ENCODE measurements at regions of chr19 and their contacts with region 1.

Region 1: DNA sequence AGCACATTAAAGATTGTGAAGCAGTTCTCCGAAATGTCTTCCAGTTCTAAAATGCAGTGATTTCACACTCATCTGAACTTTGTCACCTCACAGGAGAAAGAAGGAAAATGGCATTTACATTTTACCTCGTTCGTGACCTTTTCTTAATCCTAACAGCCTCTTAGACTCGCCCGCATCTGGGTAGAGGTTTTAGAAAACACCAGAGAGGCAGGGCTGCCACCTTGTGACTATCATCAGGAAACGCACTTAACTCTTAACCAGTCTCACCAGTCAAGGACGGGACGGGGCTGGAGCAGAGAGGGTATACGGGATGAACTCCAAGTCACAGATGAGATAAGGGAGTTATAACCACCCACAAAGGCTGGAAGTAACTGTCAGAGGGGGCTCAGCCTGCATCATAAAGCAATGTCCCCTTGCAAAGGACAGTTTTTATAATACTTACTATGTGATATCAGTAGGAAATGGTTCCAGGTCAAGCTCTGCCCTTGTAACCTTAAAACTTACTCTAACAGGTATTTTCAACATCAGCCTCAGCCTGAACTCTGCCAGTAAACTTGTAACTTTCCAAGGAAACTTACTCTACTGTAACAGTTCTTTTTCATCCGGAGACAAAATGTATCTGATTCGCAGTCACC is 8.6 kb upstream of the CEACAM6 start:
- DNase-seq: no peak
- ATAC-seq: peak; percentile 96
- H3K4me3 ChIP-seq: no peak overlapping the region
- H3K27ac ChIP-seq: no peak overlapping the region
- H3K4me1 ChIP-seq: no peaks in the 10 kb centered on the region
- H3K27me3 ChIP-seq: no peaks in the 10 kb centered on the region; the same call in 1 of the 2 replicates
- CTCF ChIP-seq: peak; percentile 80

Region 2: GRCh38 chr19:41641879-41642485 is 104.7 kb before region 1 on chr19:
- CTCF ChIA-PET with region 1: interaction called, 3 read pairs
- POLR2A ChIA-PET with region 1: no interaction called
- in situ Hi-C with region 1: no loop called
- intact Hi-C with region 1: loop called (anchors 5 kb)
- DNase-seq: peak; percentile 33
- ATAC-seq: peak; percentile 94
- H3K4me3 ChIP-seq: no peak overlapping the region
- H3K27ac ChIP-seq: no peak overlapping the region
- H3K4me1 ChIP-seq: no peaks in the 10 kb centered on the region
- H3K27me3 ChIP-seq: no peaks in the 10 kb centered on the region
- CTCF ChIP-seq: peak; percentile 89

Region 3: GRCh38 chr19:41706741-41707501 is 39.8 kb before region 1 on chr19:
- CTCF ChIA-PET with region 1: interaction called, 11 read pairs
- POLR2A ChIA-PET with region 1: no interaction called
- in situ Hi-C with region 1: no loop called
- intact Hi-C with region 1: loop called (anchors 2 kb)
- DNase-seq: peak; percentile 43
- ATAC-seq: peak; percentile 97
- H3K4me3 ChIP-seq: peak overlapping the region; percentile 12 to 40; a peak in 2 of 4 replicates
- H3K27ac ChIP-seq: no peak overlapping the region
- H3K4me1 ChIP-seq: no peaks in the 10 kb centered on the region
- H3K27me3 ChIP-seq: no peaks in the 10 kb centered on the region; the same call in 1 of the 2 replicates
- CTCF ChIP-seq: peak; percentile 97

Region 4: DNA sequence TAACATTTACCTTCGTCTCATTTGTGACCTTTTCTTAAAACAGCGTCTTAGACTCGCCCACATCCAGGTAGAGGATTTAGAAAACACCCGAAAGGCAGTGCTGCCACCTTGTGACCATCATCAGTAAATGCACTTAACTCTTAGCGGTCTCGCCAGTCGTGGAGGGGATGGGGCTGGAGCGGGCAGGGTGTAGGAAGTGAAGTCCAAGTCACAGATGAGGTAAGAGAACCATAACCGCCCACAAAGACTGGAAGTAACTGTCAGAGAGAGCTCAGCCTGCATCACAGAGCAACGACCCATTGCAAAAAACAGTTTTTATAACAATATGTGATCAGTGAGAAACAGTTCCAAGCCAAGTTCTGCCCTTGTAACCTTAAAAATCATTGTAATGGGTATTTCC is 38.9 kb after region 1 on chr19:
- CTCF ChIA-PET with region 1: interaction called, 12 read pairs
- POLR2A ChIA-PET with region 1: no interaction called
- in situ Hi-C with region 1: no loop called
- intact Hi-C with region 1: loop called (anchors 5 kb)
- DNase-seq: no peak
- ATAC-seq: peak; percentile 93
- H3K4me3 ChIP-seq: no peak overlapping the region
- H3K27ac ChIP-seq: no peak overlapping the region
- H3K4me1 ChIP-seq: 0 out of 2 replicates have a peak, but pooled peaks cover 3% of the 10 kb centered on the region
- H3K27me3 ChIP-seq: peaks cover 2% of the 10 kb centered on the region; the same call in 1 of the 2 replicates
- CTCF ChIP-seq: peak; percentile 88

Region 5: GRCh38 chr19:41821003-41821735 is 74.5 kb after region 1 on chr19:
- CTCF ChIA-PET with region 1: no interaction called
- POLR2A ChIA-PET with region 1: no interaction called
- in situ Hi-C with region 1: no loop called
- intact Hi-C with region 1: no loop called
- DNase-seq: peak; percentile 18
- ATAC-seq: peak; percentile 88
- H3K4me3 ChIP-seq: no peak overlapping the region
- H3K27ac ChIP-seq: no peak overlapping the region
- H3K4me1 ChIP-seq: no peaks in the 10 kb centered on the region
- H3K27me3 ChIP-seq: no peaks in the 10 kb centered on the region
- CTCF ChIP-seq: peak; percentile 73